ENCODE measurements at regions of chr1 and their contacts with region 1.

Region 1: GRCh38 chr1:17419626-17420328 is 19.7 kb downstream of the RCC2 start:
- DNase-seq: no peak
- ATAC-seq: peak; percentile 88
- H3K4me3 ChIP-seq: no peak overlapping the region
- H3K27ac ChIP-seq: no peak overlapping the region
- H3K4me1 ChIP-seq: no peaks in the 10 kb centered on the region
- H3K27me3 ChIP-seq: no peaks in the 10 kb centered on the region
- CTCF ChIP-seq: peak; percentile 93
- EP300 ChIP-seq: no peak
- POLR2A ChIP-seq: no peak
- RAD21 ChIP-seq: peak; percentile 84

Region 2: GRCh38 chr1:17447501-17447992 is 27.8 kb after region 1 on chr1:
- CTCF ChIA-PET with region 1: no interaction called
- POLR2A ChIA-PET with region 1: no interaction called
- in situ Hi-C with region 1: no loop called
- intact Hi-C with region 1: no loop called
- DNase-seq: no peak
- ATAC-seq: no peak
- H3K4me3 ChIP-seq: no peak overlapping the region
- H3K27ac ChIP-seq: no peak overlapping the region
- H3K4me1 ChIP-seq: peaks cover 9% of the 10 kb centered on the region
- H3K27me3 ChIP-seq: peaks cover 0 to 4% of the 10 kb centered on the region in 2 experiments; a peak in 2 of 5 replicates
- CTCF ChIP-seq: no peak
- EP300 ChIP-seq: no peak
- POLR2A ChIP-seq: no peak
- RAD21 ChIP-seq: no peak

Region 3: DNA sequence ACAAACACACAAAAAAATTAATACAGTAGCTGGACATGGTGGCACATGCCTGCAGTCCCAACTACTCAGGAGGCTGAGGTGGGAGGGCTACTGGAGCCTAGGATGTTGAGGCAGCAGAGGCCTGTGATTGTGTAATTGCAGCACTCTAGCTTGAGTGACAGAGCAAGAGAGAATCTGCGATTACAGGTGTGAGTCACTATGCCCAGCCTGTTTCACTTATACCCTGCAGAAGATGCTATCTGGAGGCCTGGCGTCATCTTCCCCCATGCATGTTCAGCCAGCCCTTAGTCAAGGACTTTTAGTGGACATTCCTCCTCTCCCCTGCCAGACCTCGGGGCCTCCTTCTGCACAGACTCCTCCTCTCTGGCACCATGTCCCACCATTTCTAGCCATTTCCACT is 56.0 kb after region 1 on chr1:
- CTCF ChIA-PET with region 1: no interaction called
- POLR2A ChIA-PET with region 1: no interaction called
- in situ Hi-C with region 1: no loop called
- intact Hi-C with region 1: loop called (anchors 5 kb)
- DNase-seq: no peak
- ATAC-seq: no peak; the same call in 2 of the 3 replicates
- H3K4me3 ChIP-seq: no peak overlapping the region
- H3K27ac ChIP-seq: no peak overlapping the region
- H3K4me1 ChIP-seq: peaks cover 10% of the 10 kb centered on the region; the same call in 1 of the 2 replicates
- H3K27me3 ChIP-seq: no peaks in the 10 kb centered on the region; a peak in 1 of 5 replicates
- CTCF ChIP-seq: no peak
- EP300 ChIP-seq: no peak
- POLR2A ChIP-seq: no peak
- RAD21 ChIP-seq: no peak

Region 4: GRCh38 chr1:17485280-17485679 is 65.5 kb after region 1 on chr1:
- CTCF ChIA-PET with region 1: interaction called, 20 read pairs
- POLR2A ChIA-PET with region 1: no interaction called
- in situ Hi-C with region 1: loop called (anchors 5 kb)
- intact Hi-C with region 1: loop called (anchors 2 kb)
- DNase-seq: no peak
- ATAC-seq: peak; percentile 80
- H3K4me3 ChIP-seq: no peak overlapping the region
- H3K27ac ChIP-seq: no peak overlapping the region
- H3K4me1 ChIP-seq: peaks cover 15% of the 10 kb centered on the region
- H3K27me3 ChIP-seq: peaks cover 0 to 3% of the 10 kb centered on the region in 2 experiments; a peak in 2 of 5 replicates
- CTCF ChIP-seq: peak; percentile 78
- EP300 ChIP-seq: no peak
- POLR2A ChIP-seq: no peak
- RAD21 ChIP-seq: peak; percentile 39; the same call in 1 of the 2 replicates

Measured in HepG2 (cell line).